OCI-LY7 (cell line): ENCODE measurements at regions of chr3 and their contacts with region 1.

Region 1: GRCh38 chr3:37855363-37855970 is 6.2 kb upstream of the CTDSPL start:
- DNase-seq: peak; percentile 72
- H3K4me3 ChIP-seq: no peak overlapping the region
- H3K27ac ChIP-seq: no peak overlapping the region
- H3K4me1 ChIP-seq: no peaks in the 10 kb centered on the region
- CTCF ChIP-seq: peak; percentile 92

Region 2: DNA sequence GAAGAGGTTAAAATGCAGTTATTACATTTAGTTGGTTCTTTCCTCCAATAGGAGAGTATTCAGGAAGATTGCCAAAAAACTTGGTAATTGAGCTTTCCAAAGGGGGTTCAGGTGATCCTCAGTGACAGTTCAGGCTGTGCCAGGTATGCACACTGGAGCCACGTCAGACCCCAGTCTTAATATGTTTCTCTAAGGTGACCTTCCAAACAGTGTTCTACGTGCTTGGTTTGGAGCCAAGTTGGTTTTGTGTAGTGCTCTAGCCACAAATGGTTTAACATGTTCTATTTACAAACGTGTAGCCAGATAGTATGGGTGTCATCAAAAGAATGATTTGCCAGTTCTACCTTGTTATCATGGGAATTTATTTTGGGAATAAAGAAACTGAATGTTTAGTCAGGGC is 27.2 kb after region 1 on chr3:
- CTCF ChIA-PET with region 1: no interaction called
- POLR2A ChIA-PET with region 1: no interaction called
- intact Hi-C with region 1: no loop called
- DNase-seq: no peak
- H3K4me3 ChIP-seq: no peak overlapping the region
- H3K27ac ChIP-seq: no peak overlapping the region
- H3K4me1 ChIP-seq: no peaks in the 10 kb centered on the region
- CTCF ChIP-seq: no peak

Region 3: GRCh38 chr3:37967260-37967881 is 111.9 kb after region 1 on chr3:
- CTCF ChIA-PET with region 1: interaction called, 3 read pairs
- POLR2A ChIA-PET with region 1: interaction called, 6 read pairs
- intact Hi-C with region 1: loop called (anchors 1 kb)
- DNase-seq: peak; percentile 75
- H3K4me3 ChIP-seq: no peak overlapping the region
- H3K27ac ChIP-seq: no peak overlapping the region
- H3K4me1 ChIP-seq: no peaks in the 10 kb centered on the region
- CTCF ChIP-seq: peak; percentile 92